ENCODE measurements at regions of chr2 and their contacts with region 1.

Region 1: DNA sequence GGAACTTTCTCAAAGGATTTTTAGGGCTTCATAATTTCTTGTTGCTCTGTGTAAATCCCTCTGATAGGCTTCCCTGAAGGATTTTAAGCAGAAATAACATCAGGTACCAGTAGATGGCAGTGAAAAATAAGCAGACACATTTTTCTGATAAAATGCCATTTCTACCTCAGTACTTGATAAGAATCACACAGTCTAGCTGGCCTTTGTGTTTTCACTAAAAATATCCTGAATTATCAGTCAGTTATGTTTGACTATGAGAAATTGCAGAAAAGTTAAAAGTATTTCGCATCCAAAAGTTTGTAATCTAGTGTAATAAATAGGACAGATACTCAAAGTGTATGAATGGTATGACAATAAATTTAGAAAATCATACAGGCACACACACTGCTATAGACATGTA is 68.7 kb downstream of the DNAJC10 start:
- DNase-seq: no peak
- ATAC-seq: no peak
- H3K4me3 ChIP-seq: no peak overlapping the region
- H3K27ac ChIP-seq: no peak overlapping the region
- H3K4me1 ChIP-seq: no peaks in the 10 kb centered on the region
- H3K27me3 ChIP-seq: no peaks in the 10 kb centered on the region

Region 2: GRCh38 chr2:182968493-182968892 is 183.7 kb after region 1 on chr2:
- intact Hi-C with region 1: loop called in 1 of 2 experiments (anchors 5 kb)
- DNase-seq: no peak
- ATAC-seq: no peak
- H3K4me3 ChIP-seq: no peak overlapping the region
- H3K27ac ChIP-seq: no peak overlapping the region
- H3K4me1 ChIP-seq: no peaks in the 10 kb centered on the region
- H3K27me3 ChIP-seq: no peaks in the 10 kb centered on the region

Region 3: GRCh38 chr2:182980115-182980514 is 195.3 kb after region 1 on chr2:
- intact Hi-C with region 1: loop called (anchors 2 kb)
- DNase-seq: no peak
- ATAC-seq: no peak
- H3K4me3 ChIP-seq: no peak overlapping the region
- H3K27ac ChIP-seq: no peak overlapping the region
- H3K4me1 ChIP-seq: no peaks in the 10 kb centered on the region
- H3K27me3 ChIP-seq: no peaks in the 10 kb centered on the region